ENCODE measurements at regions of chr2 and their contacts with region 1.

Region 1: GRCh38 chr2:17309741-17310339 is 208.4 kb downstream of the RAD51AP2 start:
- DNase-seq: peak; percentile 34
- CTCF ChIP-seq: peak; percentile 74

Region 2: GRCh38 chr2:16773080-16773713 is 536.6 kb before region 1 on chr2:
- in situ Hi-C with region 1: loop called (anchors 5 kb)
- DNase-seq: peak; percentile 40
- CTCF ChIP-seq: peak; percentile 52

Measured in GM13977 (cell line).